ENCODE measurements at regions of chr4 and their contacts with region 1.

Region 1: GRCh38 chr4:41214136-41214824 is at the start of gene APBB2:
- DNase-seq: peak; percentile 91 to 94
- H3K4me3 ChIP-seq: peak within 1 kb of the TSS; percentile 75 to 88 (median 87)
- H3K27ac ChIP-seq: peak within 1 kb of the TSS; percentile 87 to 93
- H3K4me1 ChIP-seq: no peaks in the 10 kb centered on the region
- H3K27me3 ChIP-seq: no peaks in the 10 kb centered on the region
- CTCF ChIP-seq: peak in 1 of 3 donors; percentile 48
- POLR2A ChIP-seq: no peak
- total RNA-seq, gene APBB2: 87.4 to 192 (median 153) TPM

Region 2: GRCh38 chr4:40924793-40925117 is 289.5 kb before region 1 on chr4:
- intact Hi-C with region 1: loop called (anchors 5 kb)
- DNase-seq: peak in 1 of 2 donors; percentile 11
- H3K4me3 ChIP-seq: no peak overlapping the region
- H3K27ac ChIP-seq: no peak overlapping the region
- H3K4me1 ChIP-seq: no peaks in the 10 kb centered on the region
- H3K27me3 ChIP-seq: no peaks in the 10 kb centered on the region
- CTCF ChIP-seq: no peak
- POLR2A ChIP-seq: no peak

Measured in breast epithelium (tissue), 4 donors.